CD8-positive, alpha-beta T cell (primary cell): ENCODE measurements at regions of chr17 and their contacts with region 1.

Region 1: GRCh38 chr17:34045990-34046389 is 209.1 kb upstream of the CCL2 start:
- DNase-seq: no peak
- ATAC-seq: no peak
- H3K4me3 ChIP-seq: no peak overlapping the region
- H3K4me3 Mint-ChIP-seq: no peak overlapping the region
- H3K27ac ChIP-seq: no peak overlapping the region
- H3K27ac Mint-ChIP-seq: no peak overlapping the region
- H3K4me1 ChIP-seq: no peaks in the 10 kb centered on the region
- H3K4me1 Mint-ChIP-seq: no peaks in the 10 kb centered on the region
- H3K27me3 ChIP-seq: no peaks in the 10 kb centered on the region
- H3K27me3 Mint-ChIP-seq: peaks cover 26% of the 10 kb centered on the region
- CTCF ChIP-seq: no peak

Region 2: DNA sequence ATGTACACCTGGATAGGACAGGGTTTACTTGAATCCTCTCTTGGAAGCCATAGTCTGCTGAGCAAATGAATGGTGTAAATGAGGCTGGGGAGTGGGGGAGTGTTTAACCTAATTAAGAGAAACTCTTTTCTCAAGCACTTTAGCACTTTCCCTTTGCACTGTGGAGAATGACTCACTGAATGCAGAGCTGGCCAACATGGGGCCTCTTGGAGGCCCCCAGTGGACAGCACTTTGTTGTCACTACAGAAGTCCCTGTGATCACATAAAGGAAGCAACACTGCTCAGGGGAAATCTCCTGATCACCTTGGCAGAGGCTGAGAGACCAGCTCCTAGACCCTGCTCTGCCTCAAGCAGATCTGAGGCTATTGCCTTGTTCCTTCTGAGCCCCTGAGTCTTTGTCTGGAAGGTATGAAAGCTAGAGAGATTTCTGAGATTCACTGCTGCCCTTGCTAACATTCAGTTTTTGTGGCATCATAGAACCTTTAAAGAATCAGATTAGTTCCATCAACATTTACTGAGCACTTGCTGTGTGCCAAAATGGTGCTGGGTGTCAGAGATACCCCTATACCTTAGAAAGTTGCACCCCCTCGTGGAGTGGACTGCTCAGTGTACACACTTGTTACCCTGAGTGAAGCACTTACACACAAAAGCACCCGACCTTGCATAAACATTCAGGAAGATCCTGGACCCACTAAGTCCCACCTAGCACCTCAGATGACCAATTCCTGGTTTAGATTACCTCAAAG is 21.0 kb before region 1 on chr17:
- CTCF ChIA-PET with region 1: no interaction called
- POLR2A ChIA-PET with region 1: no interaction called
- intact Hi-C with region 1: no loop called
- DNase-seq: peak in 2 of 9 experiments; percentile 3 to 4
- ATAC-seq: no peak
- H3K4me3 ChIP-seq: no peak overlapping the region
- H3K4me3 Mint-ChIP-seq: no peak overlapping the region
- H3K27ac ChIP-seq: no peak overlapping the region
- H3K27ac Mint-ChIP-seq: no peak overlapping the region
- H3K4me1 ChIP-seq: no peaks in the 10 kb centered on the region
- H3K4me1 Mint-ChIP-seq: no peaks in the 10 kb centered on the region
- H3K27me3 ChIP-seq: peaks cover 0 to 3% of the 10 kb centered on the region in 2 experiments
- H3K27me3 Mint-ChIP-seq: peaks cover 36% of the 10 kb centered on the region
- CTCF ChIP-seq: no peak

Region 3: DNA sequence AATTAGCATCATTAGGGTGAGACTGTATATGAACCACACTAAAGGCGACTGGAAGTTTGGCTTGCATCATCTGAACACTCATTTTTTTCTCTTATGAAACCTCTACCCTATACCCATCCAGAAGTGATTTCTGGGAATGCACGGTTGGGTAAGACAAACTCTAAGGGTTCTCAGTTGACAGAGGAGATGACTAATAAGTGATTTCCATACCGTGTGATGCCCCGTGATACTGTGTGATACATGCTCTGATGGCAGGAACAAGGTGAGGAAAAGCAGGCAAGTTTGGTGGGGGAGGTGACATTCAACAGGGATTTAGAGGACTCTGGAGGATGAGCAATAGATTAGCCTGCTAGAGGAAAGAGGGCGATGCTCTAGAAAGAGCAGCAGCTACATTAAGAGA is 52.7 kb after region 1 on chr17:
- CTCF ChIA-PET with region 1: no interaction called
- POLR2A ChIA-PET with region 1: no interaction called
- intact Hi-C with region 1: loop called in 1 of 2 experiments (anchors 5 kb)
- DNase-seq: no peak
- ATAC-seq: no peak
- H3K4me3 ChIP-seq: no peak overlapping the region
- H3K4me3 Mint-ChIP-seq: no peak overlapping the region
- H3K27ac ChIP-seq: no peak overlapping the region
- H3K27ac Mint-ChIP-seq: no peak overlapping the region
- H3K4me1 ChIP-seq: no peaks in the 10 kb centered on the region
- H3K4me1 Mint-ChIP-seq: no peaks in the 10 kb centered on the region
- H3K27me3 ChIP-seq: no peaks in the 10 kb centered on the region
- H3K27me3 Mint-ChIP-seq: peaks cover 28% of the 10 kb centered on the region
- CTCF ChIP-seq: no peak